Activated CD8-positive, alpha-beta memory T cell treated with anti-CD3 and anti-CD28 coated beads, Interleukin-2, amount 10 ng/mL, durations not matched to agents 7 days and 5 days (primary cell): ENCODE measurements at regions of chr11 and their contacts with region 1.

Region 1: GRCh38 chr11:17991783-17992433 is 20.9 kb downstream of the SERGEF start:
- DNase-seq: peak; percentile 59
- ATAC-seq: peak; percentile 80
- H3K4me3 Mint-ChIP-seq: no peak overlapping the region
- H3K27ac Mint-ChIP-seq: no peak overlapping the region
- H3K4me1 Mint-ChIP-seq: peaks cover 2% of the 10 kb centered on the region
- H3K27me3 Mint-ChIP-seq: no peaks in the 10 kb centered on the region

Region 2: GRCh38 chr11:17635551-17635938 is 356.4 kb before region 1 on chr11:
- CTCF ChIA-PET with region 1: no interaction called
- DNase-seq: no peak
- ATAC-seq: no peak
- H3K4me3 Mint-ChIP-seq: no peak overlapping the region
- H3K27ac Mint-ChIP-seq: no peak overlapping the region
- H3K4me1 Mint-ChIP-seq: no peaks in the 10 kb centered on the region
- H3K27me3 Mint-ChIP-seq: no peaks in the 10 kb centered on the region

Region 3: GRCh38 chr11:17960091-17960490 is 31.8 kb before region 1 on chr11:
- CTCF ChIA-PET with region 1: no interaction called
- DNase-seq: no peak
- ATAC-seq: no peak
- H3K4me3 Mint-ChIP-seq: no peak overlapping the region
- H3K27ac Mint-ChIP-seq: no peak overlapping the region
- H3K4me1 Mint-ChIP-seq: peaks cover 2% of the 10 kb centered on the region
- H3K27me3 Mint-ChIP-seq: no peaks in the 10 kb centered on the region

Region 4: GRCh38 chr11:18012863-18013781 is 21.2 kb after region 1 on chr11 and contains the start of gene SERGEF:
- CTCF ChIA-PET with region 1: interaction called, 10 read pairs
- DNase-seq: peak; percentile 95
- ATAC-seq: peak; percentile 94
- H3K4me3 Mint-ChIP-seq: peak within 1 kb of the TSS; percentile 86
- H3K27ac Mint-ChIP-seq: peak within 1 kb of the TSS; percentile 98
- H3K4me1 Mint-ChIP-seq: peaks cover 33% of the 10 kb centered on the region
- H3K27me3 Mint-ChIP-seq: no peaks in the 10 kb centered on the region
- total RNA-seq, gene SERGEF: 30.4 to 38.8 TPM